HEK293 (cell line): ENCODE measurements at regions of chr12 and their contacts with region 1.

Region 1: GRCh38 chr12:47837190-47838171 is 17.8 kb upstream of the HDAC7 start:
- H3K4me3 ChIP-seq: no peak overlapping the region
- H3K27ac ChIP-seq: no peak overlapping the region
- H3K4me1 ChIP-seq: no peaks in the 10 kb centered on the region
- CTCF ChIP-seq: peak; percentile 67; the same call in 1 of the 2 replicates

Region 2: DNA sequence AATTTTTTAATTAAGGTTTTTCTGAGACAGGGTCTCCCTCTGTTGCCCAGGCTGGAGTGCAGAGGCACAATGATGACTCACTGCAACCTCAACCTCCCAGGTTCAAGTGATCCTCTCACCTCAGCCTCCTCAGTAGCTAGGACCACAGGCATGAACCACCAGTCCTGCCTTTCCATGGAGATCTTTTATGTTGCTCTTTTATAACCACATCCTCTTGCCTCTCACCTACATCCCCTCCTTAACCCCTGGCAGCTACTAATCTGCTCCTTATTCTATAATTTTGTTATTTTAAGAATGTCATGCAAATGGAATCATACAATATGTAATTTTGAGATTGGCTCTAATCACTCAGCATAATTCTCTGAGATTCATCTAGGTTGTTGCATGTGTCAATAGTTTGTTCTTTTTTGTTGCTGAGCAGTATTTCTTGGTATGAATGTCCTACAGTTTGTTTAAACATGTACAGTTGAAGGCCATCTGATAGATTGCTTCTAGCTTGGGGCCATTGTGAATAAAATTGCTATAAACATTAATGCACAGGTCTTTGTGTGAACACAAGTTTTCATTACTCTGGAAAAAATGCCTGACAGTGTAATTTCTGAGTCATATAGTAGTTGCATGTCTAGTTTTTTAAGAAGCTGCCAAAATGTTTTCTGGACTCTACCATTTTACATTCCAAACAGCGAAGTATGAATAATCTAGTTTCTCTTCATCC is 508.5 kb before region 1 on chr12:
- CTCF ChIA-PET with region 1: no interaction called
- POLR2A ChIA-PET with region 1: no interaction called
- H3K4me3 ChIP-seq: no peak overlapping the region
- H3K27ac ChIP-seq: no peak overlapping the region
- H3K4me1 ChIP-seq: no peaks in the 10 kb centered on the region
- CTCF ChIP-seq: no peak

Region 3: GRCh38 chr12:47715393-47715876 is 122.0 kb before region 1 on chr12:
- CTCF ChIA-PET with region 1: interaction called, 271 read pairs
- POLR2A ChIA-PET with region 1: no interaction called
- H3K4me3 ChIP-seq: no peak overlapping the region
- H3K27ac ChIP-seq: no peak overlapping the region
- H3K4me1 ChIP-seq: peaks cover 5% of the 10 kb centered on the region
- CTCF ChIP-seq: peak; percentile 69

Region 4: DNA sequence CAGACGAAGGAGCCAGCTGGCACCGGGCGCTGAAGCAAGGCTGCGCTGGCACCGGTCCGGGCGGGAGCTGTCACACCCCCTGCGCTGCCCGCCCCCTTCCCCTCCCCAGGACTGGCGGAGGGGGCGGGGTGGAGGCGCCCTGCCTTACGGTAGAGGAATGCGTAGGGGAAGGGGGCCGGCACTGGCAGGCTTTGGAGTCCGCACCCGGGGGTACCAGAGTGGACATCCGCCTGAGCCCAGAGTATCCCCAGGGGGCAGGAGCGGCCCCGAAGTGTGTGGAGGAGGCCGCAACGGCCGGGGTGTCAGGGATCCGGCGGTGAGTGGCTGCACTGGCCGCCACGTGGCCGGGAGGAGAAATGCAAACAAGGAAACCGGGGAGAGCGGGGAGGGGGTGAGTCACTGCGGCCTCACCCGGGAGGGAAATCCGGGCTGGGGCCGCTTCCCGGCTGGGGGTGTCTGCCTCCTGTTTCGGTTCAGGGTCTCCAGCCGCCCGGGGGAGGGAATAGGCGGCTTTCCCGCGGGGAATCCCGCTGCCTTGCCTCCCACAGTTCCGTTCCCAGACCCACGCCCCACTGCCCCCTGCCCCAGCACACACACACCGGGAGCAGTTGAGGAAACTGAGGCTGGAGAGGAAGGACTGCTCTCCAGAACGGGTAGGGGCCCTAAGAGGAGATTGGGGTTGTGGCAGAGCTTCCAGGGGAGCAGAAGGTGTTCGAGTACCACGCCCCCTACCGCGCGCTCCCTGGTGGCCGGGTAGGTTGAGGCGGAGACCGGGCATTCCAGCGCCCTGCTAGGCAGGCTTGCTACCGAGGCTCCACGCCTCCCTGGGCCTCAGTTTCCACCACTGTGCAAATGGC is 78.4 kb before region 1 on chr12 and contains the start of gene RAPGEF3:
- CTCF ChIA-PET with region 1: interaction called, 11 read pairs
- POLR2A ChIA-PET with region 1: interaction called, 3 read pairs
- H3K4me3 ChIP-seq: peak within 1 kb of the TSS; percentile 46
- H3K27ac ChIP-seq: peak within 1 kb of the TSS; percentile 11; the same call in 1 of the 2 replicates
- H3K4me1 ChIP-seq: peaks cover 5% of the 10 kb centered on the region; the same call in 1 of the 2 replicates
- CTCF ChIP-seq: peak; percentile 71

Region 5: GRCh38 chr12:47785036-47785886 is 52.2 kb before region 1 on chr12:
- CTCF ChIA-PET with region 1: interaction called, 182 read pairs
- POLR2A ChIA-PET with region 1: interaction called, 10 read pairs
- H3K4me3 ChIP-seq: no peak overlapping the region
- H3K27ac ChIP-seq: no peak overlapping the region
- H3K4me1 ChIP-seq: no peaks in the 10 kb centered on the region
- CTCF ChIP-seq: no peak

Region 6: DNA sequence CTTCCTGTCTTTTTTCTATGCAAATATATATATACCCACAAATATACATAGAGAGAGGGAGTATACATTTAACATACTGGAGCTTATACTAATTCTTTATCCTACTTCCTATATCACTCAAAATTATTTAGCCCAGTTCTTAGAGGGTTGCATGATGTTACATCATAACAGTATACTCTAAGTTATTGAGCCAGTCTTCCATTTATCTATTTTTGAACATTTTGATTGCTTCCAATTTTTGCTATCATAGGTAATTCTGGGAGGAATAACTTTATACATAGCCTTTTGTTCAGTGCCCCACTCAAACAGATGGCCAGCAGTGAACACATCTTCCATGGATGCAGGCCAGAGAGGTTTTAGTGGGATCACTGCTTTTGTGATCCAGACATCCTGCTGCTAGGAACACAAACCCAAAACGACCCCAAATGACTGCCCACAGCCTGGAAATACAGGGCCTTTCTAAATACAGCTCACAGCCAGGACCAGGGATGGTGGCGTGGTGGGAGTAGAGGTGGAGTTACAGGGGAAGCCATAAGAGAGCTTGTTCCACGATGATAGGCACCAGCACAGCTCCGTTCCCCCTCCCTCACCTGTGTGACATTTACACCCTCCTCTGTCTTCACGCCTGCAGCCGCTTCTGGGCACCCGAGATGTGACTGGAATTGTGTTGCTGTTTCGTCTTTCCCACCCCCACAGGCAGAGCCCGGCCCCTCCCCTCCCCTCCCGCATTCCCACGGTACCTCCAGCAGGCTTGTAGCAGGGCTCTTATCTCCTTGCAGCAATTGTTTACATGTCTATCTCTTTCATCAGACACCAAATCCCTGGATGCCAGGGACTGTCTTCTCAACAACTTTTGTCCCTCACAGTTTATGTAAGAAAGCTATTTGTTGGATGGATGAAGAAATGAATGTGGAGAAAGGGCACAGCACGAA is 12.9 kb after region 1 on chr12:
- CTCF ChIA-PET with region 1: interaction called, 42 read pairs
- POLR2A ChIA-PET with region 1: no interaction called
- H3K4me3 ChIP-seq: no peak overlapping the region
- H3K27ac ChIP-seq: no peak overlapping the region
- H3K4me1 ChIP-seq: peaks cover 3% of the 10 kb centered on the region; the same call in 1 of the 2 replicates
- CTCF ChIP-seq: no peak